ENCODE measurements at regions of chr10 and their contacts with region 1.

Region 1: DNA sequence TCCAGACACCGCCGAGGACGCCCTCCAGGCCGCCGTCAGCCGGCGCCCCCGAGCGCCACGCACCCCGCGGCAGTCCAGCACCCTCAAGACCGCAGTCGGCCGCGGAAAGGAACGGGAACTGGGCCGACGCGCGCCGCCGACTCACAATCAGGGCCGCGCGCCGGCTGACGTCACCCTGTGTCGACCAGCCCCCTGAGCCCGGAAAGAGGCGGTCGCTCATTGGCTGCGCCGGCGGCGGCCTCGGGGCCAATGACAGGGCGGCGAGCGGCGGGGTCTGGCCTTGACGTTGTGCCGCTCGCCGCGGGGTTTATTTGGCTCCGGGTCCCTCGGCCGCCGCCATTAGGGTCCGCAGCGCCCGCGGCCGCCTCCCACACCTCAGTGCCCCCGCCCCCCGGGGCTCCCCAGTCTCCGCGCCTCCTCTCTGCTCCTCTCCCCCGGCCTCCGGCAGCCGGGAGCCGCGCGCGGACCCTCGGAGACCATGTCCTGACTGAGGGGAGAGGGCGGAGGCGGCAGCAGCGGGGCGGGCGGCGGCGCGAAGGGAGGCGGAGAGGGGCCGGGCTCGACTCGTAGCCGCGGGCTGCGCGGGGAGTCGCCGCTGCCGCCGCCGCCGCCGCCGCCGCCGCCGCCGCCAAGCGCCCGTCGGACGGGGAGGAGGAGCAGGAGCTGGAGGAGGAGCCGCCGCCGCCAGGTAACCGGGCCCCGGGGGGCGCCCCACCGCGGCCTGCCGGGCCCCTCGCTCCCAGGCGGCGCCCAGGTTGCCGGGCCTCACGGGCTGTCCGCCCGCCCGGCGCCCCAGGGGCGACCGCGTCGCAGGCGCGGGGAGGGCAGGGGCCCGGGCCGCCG is 25.1 kb upstream of the ZRANB1 start:
- DNase-seq: peak; percentile 99 to 100 (median 99)
- ATAC-seq: peak; percentile 99
- H3K4me3 ChIP-seq: peak overlapping the region; percentile 86
- H3K27ac ChIP-seq: peak overlapping the region; percentile 93
- H3K4me1 ChIP-seq: peaks cover 2% of the 10 kb centered on the region
- H3K27me3 ChIP-seq: no peaks in the 10 kb centered on the region

Region 2: DNA sequence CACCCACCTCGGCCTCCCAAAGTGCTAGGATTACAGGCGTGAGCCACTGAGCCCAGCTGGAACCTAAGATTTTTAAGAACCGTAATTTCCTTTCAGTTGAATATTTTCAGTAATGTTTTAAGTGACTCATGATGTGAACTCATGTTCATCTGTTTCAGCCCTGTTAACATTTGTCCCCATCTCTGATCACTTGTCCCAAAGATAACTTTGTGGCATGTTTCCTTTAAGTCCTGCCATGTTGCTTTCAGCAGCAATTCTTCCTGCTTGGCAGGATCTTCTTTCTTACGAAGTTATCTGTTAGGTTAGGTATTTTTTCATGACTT is 44.4 kb after region 1 on chr10:
- intact Hi-C with region 1: loop called in 1 of 4 experiments (anchors 5 kb)
- DNase-seq: no peak
- ATAC-seq: no peak
- H3K4me3 ChIP-seq: no peak overlapping the region
- H3K27ac ChIP-seq: no peak overlapping the region
- H3K4me1 ChIP-seq: peaks cover 10% of the 10 kb centered on the region
- H3K27me3 ChIP-seq: no peaks in the 10 kb centered on the region

Region 3: DNA sequence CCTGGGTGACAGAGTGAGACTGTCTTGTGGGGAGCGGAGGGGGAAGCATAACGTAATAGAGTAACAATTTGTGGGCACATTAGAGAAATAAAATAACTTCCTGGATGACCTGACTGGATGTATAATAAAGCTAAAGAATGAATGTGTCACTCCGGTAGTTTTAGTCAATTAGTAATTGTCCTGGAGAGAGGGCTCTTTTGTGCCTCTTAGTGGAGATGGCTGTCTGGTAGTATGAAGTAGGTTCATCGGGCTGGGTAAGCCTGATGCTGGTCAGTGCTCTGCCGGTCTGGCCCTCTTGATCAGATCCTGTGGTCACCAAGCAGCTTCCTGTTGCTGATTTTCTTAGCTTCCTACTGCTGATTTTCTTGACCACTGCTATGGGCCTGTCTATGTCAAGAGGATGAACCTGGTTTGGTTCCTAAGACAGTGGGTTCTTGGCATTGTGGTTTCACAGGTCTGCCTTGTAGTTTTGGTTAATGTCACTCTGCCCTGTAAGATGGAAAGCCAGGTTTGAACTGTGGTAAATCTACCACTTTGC is 59.2 kb after region 1 on chr10:
- intact Hi-C with region 1: loop called in 1 of 4 experiments (anchors 10 kb)
- DNase-seq: no peak
- ATAC-seq: peak in 1 of 2 donors; percentile 42
- H3K4me3 ChIP-seq: no peak overlapping the region
- H3K27ac ChIP-seq: no peak overlapping the region
- H3K4me1 ChIP-seq: peaks cover 2% of the 10 kb centered on the region
- H3K27me3 ChIP-seq: no peaks in the 10 kb centered on the region

Region 4: DNA sequence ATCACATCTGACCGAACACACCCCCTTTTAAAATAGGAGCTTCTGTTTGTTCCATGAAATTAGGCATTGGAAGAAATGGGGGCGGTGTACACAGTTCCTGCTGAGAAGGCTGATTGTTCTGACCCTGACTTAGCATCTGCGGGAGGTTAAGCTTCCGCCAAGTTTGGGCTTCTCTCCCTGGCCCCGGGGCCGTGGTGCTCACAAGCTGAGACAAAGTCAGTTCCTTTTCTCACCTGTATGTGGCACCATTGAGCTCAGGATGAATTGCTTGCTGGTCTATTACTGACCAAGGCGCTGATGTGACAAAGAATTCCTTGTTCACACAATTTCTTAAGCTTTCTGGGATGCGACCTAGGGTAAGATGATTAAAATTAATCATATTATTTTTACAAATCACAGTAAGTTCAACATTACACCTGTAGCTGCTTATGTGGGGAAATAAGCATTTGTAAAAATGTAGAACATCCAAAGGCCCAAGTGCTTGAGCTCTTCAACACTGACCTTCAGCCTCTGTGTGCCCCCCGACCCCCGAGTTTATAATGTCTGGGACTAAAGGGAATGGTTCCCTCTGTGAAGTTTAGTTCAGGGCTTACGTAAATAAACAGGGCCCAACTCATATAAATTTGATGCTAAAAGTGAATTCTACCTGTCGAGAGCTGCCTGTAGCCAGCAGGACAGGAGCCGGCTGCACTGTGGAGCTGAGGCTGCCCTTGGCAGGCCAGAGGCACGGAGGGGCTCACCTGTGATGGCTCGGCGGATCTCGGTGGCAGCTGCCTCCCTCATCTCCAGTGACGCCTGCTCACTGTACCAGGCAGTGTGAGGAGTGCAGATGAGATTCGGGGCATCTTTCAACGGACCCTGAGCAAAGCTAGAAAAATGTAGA is 75.9 kb after region 1 on chr10:
- intact Hi-C with region 1: no loop called
- DNase-seq: peak; percentile 76 to 88 (median 83)
- ATAC-seq: peak; percentile 61 to 73
- H3K4me3 ChIP-seq: no peak overlapping the region
- H3K27ac ChIP-seq: peak overlapping the region; percentile 43
- H3K4me1 ChIP-seq: peaks cover 4% of the 10 kb centered on the region
- H3K27me3 ChIP-seq: no peaks in the 10 kb centered on the region

Measured in right cardiac atrium (tissue), 5 donors.